HEK293 (cell line): ENCODE measurements at regions of chr5 and their contacts with region 1.

Region 1: DNA sequence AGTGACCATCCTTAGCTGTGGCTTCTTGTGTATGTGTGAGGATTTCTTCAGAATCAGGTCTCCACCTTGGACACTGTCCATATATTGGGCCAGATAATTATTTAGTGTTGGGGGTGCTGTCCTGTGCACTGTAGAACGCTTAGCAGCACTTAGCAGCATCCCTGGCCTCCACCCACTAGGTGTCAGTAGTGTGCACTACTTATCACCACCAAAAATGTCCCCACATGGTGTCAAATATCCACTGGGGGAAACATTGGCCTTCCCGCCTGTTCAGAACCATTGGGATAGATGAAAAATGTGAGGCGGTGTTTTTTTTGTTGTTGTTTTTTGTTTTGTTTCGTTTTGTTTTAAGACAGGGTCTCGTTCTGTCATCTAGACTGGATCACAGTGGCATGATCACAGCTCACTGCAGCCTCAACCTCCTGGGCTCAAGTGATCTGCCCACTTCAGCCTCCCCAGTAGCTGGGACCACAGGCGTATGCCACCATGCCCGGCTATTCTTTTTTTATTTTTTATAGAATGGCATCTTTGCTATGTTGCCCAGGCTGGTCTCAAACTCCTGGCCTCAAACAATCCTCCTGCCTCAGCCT is 67.7 kb downstream of the TENT4A start:
- H3K4me3 ChIP-seq: no peak overlapping the region
- H3K27ac ChIP-seq: no peak overlapping the region
- H3K4me1 ChIP-seq: no peaks in the 10 kb centered on the region
- CTCF ChIP-seq: no peak

Region 2: DNA sequence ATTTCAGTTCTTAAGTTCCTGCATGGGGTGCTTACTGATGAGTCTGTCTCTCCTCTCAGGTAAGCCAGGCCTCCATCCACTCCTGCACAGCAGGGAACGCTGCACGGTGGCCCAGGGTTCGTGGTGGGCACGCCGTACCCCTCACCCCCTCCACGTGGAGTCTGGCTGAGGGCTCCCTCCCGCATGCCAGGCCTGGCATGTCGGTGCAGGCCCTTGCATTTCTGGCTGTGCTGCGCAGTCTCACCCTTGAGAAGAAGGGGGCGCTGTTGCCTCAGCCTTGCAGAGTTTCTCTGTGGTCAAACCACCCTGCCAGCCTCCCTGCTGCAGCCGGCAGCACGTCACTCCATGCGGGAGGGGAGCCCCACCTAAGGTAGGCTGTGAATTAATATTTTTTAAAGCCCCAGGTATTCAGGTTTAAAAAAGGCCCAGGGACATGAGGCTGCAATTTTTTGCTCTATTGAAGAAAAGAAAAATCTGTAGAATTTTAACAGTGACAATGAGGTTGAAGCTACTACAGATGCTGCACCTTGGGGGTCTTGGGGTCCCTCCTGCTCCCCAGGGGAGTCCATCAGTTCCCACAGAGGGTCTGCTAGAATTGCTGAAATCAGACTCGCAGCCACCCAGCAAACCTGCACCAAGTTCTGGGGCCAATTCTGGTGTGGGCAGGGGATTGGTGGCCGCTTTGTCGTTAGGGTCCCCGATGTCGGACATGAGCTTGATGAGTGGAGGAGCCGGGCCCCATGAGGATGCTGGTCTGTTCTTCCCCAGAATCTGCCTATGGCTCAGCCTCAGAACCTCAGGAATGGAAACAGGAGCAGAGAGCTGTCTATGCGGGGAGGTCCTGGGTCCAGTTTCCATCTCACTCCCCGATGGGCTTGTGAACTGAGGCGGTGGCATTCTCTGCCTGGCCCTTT is 15.0 kb before region 1 on chr5:
- CTCF ChIA-PET with region 1: interaction called, 39 read pairs
- POLR2A ChIA-PET with region 1: no interaction called
- H3K4me3 ChIP-seq: no peak overlapping the region
- H3K27ac ChIP-seq: no peak overlapping the region
- H3K4me1 ChIP-seq: no peaks in the 10 kb centered on the region
- CTCF ChIP-seq: peak; percentile 88

Region 3: GRCh38 chr5:6792911-6793471 is 12.1 kb after region 1 on chr5:
- CTCF ChIA-PET with region 1: interaction called, 10 read pairs
- POLR2A ChIA-PET with region 1: no interaction called
- H3K4me3 ChIP-seq: no peak overlapping the region
- H3K27ac ChIP-seq: no peak overlapping the region
- H3K4me1 ChIP-seq: no peaks in the 10 kb centered on the region
- CTCF ChIP-seq: no peak